ENCODE measurements at regions of chr20 and their contacts with region 1.

Region 1: GRCh38 chr20:50929299-50930138 is 1.7 kb downstream of the ADNP start:
- DNase-seq: peak; percentile 91 to 99 (median 92)
- ATAC-seq: peak; percentile 81
- H3K4me3 ChIP-seq: peak overlapping the region; percentile 89
- H3K4me1 ChIP-seq: peaks cover 40% of the 10 kb centered on the region
- CTCF ChIP-seq: peak; percentile 84

Region 2: DNA sequence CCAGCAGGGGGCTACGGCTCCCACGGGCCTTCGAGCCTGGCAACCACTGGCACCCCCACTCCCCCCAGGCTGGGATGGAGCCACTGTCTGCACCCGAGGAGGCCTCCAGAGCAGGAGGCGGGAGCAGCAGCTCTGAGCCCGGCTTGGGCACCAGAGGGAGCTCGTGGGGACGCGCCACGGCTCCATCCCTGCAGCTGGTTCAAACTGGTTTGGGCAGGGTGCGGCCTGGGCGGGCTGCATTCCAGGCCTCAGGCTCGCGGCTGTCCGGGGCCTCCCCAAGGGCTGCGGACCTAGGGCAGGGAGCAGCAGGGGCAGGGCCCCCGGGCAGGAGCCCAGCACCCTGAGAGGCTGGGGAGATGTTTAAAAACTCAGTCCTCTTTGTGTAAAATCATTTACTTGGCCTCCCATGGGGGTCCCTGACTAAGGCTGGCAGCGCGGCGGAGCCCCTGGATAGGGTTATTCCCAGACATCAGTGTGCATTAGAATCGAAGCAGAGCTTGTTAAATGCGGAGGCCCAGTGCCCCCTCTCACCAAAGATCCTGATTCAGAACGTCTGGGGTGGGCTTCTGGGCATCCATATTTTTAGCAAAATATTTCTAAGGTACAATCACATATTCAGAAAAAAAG is 138.8 kb before region 1 on chr20:
- intact Hi-C with region 1: loop called (anchors 10 kb)
- DNase-seq: peak; percentile 94 to 95 (median 95)
- ATAC-seq: peak; percentile 92
- H3K4me3 ChIP-seq: no peak overlapping the region
- H3K4me1 ChIP-seq: peaks cover 17% of the 10 kb centered on the region
- CTCF ChIP-seq: peak; percentile 83

Region 3: DNA sequence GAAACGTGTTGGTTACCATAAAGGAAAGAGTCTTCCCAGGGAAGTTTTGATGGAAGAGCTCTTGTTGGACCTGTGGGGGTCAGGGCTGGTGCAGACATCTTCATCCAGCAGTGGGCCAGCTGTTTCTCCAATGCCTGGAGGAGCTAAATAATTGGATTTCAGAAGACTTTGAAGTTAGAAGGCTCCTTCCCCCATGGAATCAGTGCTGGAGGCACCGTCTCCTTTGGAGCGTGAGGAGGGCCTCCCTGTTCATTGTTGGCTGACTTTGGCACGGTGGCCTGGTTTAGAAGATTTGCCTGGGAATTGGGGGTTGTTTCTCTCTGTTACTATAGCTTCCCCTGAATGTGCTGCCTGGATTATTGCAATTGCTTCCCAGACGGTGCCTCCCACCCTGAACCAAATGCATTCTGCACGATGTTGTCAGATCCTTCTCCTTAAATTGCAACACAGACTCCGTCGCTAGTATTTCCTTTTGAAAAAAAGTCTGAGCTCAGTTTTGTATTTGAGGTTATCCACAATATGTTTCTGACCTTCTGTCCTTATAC is 121.1 kb after region 1 on chr20:
- intact Hi-C with region 1: no loop called
- DNase-seq: no peak
- ATAC-seq: no peak
- H3K4me3 ChIP-seq: no peak overlapping the region
- H3K4me1 ChIP-seq: no peaks in the 10 kb centered on the region
- CTCF ChIP-seq: no peak